ENCODE measurements at regions of chr14 and their contacts with region 1.

Region 1: DNA sequence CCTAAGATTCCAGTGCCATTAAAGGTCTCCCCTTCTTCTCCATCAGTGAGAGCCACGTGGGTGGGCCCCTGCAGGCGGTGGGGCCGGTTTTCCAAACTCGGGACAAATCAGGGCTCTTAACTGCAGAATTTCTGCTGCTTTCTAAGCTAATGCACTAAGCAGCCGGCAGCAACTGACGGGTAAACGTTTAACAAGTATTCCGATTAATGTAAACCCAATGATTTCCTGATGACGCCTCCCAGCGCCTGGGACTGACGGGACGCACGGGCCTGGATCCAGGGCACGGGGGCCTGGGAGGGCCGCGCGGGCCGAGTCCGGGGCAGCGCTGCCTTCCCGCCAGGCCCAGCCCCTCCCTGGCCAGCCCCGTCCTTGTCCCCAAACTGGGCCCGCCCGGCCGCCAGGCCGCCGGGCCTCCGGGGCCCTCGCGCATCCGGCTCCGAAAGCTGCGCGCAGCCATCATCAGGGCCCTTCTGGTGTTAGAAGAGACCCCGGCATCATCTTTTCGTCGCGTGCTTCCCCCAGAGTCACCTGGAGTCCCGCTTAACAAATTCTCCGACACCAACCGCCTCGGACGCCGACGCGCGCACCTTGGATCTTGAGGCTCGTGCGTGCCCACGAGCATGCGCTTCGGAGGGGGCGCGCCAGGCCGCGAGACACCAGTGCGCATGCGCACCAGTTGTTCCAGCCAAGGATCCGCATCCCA is at the start of gene MLH3:
- DNase-seq: peak; percentile 69 to 82 (median 78)
- ATAC-seq: peak; percentile 90
- H3K4me3 ChIP-seq: peak within 1 kb of the TSS; percentile 81
- H3K4me3 Mint-ChIP-seq: peak within 1 kb of the TSS; percentile 92 to 96 (median 94)
- H3K27ac ChIP-seq: peak within 1 kb of the TSS; percentile 86
- H3K27ac Mint-ChIP-seq: peak within 1 kb of the TSS; percentile 90 to 98 (median 95)
- H3K4me1 ChIP-seq: peaks cover 8 to 9% of the 10 kb centered on the region in 2 donors
- H3K4me1 Mint-ChIP-seq: peaks cover 19 to 65% (median 47%) of the 10 kb centered on the region in 7 donors
- H3K27me3 ChIP-seq: no peaks in the 10 kb centered on the region
- H3K27me3 Mint-ChIP-seq: no peaks in the 10 kb centered on the region
- total RNA-seq, gene MLH3: 19.9 to 26.7 (median 20.5) TPM

Region 2: GRCh38 chr14:74893614-74894091 is 157.3 kb before region 1 on chr14:
- CTCF ChIA-PET with region 1: no interaction called
- POLR2A ChIA-PET with region 1: no interaction called
- intact Hi-C with region 1: no loop called
- DNase-seq: no peak
- ATAC-seq: peak; percentile 47
- H3K4me3 ChIP-seq: no peak overlapping the region
- H3K4me3 Mint-ChIP-seq: no peak overlapping the region
- H3K27ac ChIP-seq: no peak overlapping the region
- H3K27ac Mint-ChIP-seq: peak overlapping the region in 5 of 9 donors; percentile 9 to 78 (median 36)
- H3K4me1 ChIP-seq: no peaks in the 10 kb centered on the region
- H3K4me1 Mint-ChIP-seq: peaks cover 0 to 11% (median 7%) of the 10 kb centered on the region in 7 donors
- H3K27me3 ChIP-seq: no peaks in the 10 kb centered on the region
- H3K27me3 Mint-ChIP-seq: no peaks in the 10 kb centered on the region

Region 3: DNA sequence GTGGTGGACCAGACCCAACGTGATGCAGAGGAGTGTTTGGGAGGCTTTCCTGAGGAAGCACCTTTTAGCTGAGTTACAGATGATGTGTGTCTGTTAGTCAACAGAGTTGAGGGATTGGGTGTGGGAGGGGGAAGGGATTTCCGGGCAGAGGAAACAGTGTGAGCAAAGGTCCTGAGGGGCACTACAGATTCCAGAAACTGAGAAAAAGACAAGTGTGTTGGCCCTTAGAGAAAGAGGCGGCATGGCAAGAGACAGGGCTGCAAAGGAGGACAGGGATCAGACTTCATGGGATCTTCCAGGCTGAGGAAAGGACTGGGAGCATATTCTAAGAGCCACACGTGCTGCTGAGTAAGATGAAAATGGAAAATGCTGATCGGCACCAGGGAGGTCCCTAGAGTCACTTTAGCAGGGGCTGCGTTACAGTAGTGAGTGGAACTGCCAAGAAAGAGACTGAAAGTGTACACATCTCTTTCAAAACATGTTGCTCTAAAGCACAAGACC is 118.6 kb before region 1 on chr14:
- CTCF ChIA-PET with region 1: no interaction called
- POLR2A ChIA-PET with region 1: no interaction called
- intact Hi-C with region 1: no loop called
- DNase-seq: no peak
- ATAC-seq: no peak
- H3K4me3 ChIP-seq: no peak overlapping the region
- H3K4me3 Mint-ChIP-seq: no peak overlapping the region
- H3K27ac ChIP-seq: no peak overlapping the region
- H3K27ac Mint-ChIP-seq: peak overlapping the region in 3 of 9 donors; percentile 22 to 50 (median 25)
- H3K4me1 ChIP-seq: peaks cover 0 to 3% of the 10 kb centered on the region in 2 donors
- H3K4me1 Mint-ChIP-seq: peaks cover 8 to 25% (median 22%) of the 10 kb centered on the region in 7 donors
- H3K27me3 ChIP-seq: no peaks in the 10 kb centered on the region
- H3K27me3 Mint-ChIP-seq: peaks cover 0 to 16% (median 3%) of the 10 kb centered on the region in 5 donors

Region 4: GRCh38 chr14:75063407-75064213 is 12.6 kb after region 1 on chr14 and contains the start of gene ACYP1:
- CTCF ChIA-PET with region 1: interaction called, 3 read pairs
- POLR2A ChIA-PET with region 1: interaction called, 29 read pairs
- intact Hi-C with region 1: loop called (anchors 1 kb)
- DNase-seq: peak; percentile 79 to 93 (median 86)
- ATAC-seq: peak; percentile 99
- H3K4me3 ChIP-seq: peak within 1 kb of the TSS; percentile 98
- H3K4me3 Mint-ChIP-seq: peak within 1 kb of the TSS; percentile 93 to 100 (median 99)
- H3K27ac ChIP-seq: peak within 1 kb of the TSS; percentile 83
- H3K27ac Mint-ChIP-seq: peak within 1 kb of the TSS; percentile 90 to 99 (median 96)
- H3K4me1 ChIP-seq: peaks cover 10 to 13% of the 10 kb centered on the region in 2 donors
- H3K4me1 Mint-ChIP-seq: peaks cover 15 to 38% (median 27%) of the 10 kb centered on the region in 7 donors
- H3K27me3 ChIP-seq: no peaks in the 10 kb centered on the region
- H3K27me3 Mint-ChIP-seq: no peaks in the 10 kb centered on the region
- total RNA-seq, gene ACYP1: 11.8 to 39.5 (median 31.2) TPM

Region 5: DNA sequence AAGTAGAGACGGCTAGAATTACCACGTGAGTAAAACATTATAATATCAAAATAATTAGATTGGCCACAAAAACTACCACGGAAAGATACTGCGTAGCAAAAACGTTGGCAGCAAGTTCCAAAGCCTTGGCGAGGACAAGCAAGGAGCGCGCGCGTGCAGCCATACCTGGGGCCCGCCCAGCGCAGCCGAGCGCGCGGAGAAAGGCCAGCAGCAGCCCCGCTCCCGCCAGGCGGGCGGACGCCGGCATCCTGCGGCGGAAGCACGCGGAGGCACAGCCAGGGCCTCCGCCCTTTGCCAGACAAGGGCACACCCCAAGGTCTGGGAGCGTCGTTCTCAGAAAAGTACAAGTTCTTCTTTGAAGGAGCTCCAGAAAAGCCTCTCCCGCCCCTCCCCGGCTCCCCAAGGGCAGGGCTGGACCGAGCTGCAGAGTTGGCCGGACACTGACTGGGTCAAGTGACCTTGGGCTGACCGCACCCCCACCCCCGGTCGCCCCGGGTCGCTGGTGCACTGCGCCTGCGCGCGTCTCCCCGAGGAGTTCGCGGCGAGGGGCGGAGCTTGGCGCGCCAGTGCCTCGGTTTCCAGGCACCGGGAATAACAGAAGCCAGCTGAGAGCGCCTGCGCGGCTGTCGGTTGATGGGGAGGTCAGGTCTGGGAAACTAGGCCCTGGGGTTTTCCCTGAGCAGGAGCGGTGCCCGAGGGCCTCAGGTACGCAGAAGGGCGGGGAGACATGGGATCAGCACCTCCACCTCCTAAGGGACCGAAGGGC is 18.2 kb after region 1 on chr14 and contains the start of gene ZC2HC1C:
- CTCF ChIA-PET with region 1: no interaction called
- POLR2A ChIA-PET with region 1: interaction called, 29 read pairs
- intact Hi-C with region 1: loop called in 1 of 2 experiments (anchors 2 kb)
- DNase-seq: peak; percentile 11 to 82 (median 34)
- ATAC-seq: peak; percentile 85
- H3K4me3 ChIP-seq: peak within 1 kb of the TSS; percentile 69
- H3K4me3 Mint-ChIP-seq: peak within 1 kb of the TSS in 6 of 10 donors; percentile 36 to 82 (median 68)
- H3K27ac ChIP-seq: peak within 1 kb of the TSS; percentile 46
- H3K27ac Mint-ChIP-seq: peak within 1 kb of the TSS in 2 of 9 donors; percentile 15 to 81
- H3K4me1 ChIP-seq: peaks cover 7 to 8% of the 10 kb centered on the region in 2 donors
- H3K4me1 Mint-ChIP-seq: peaks cover 2 to 15% (median 6%) of the 10 kb centered on the region in 7 donors
- H3K27me3 ChIP-seq: no peaks in the 10 kb centered on the region
- H3K27me3 Mint-ChIP-seq: peaks cover 0 to 3% (median 0%) of the 10 kb centered on the region in 5 donors
- total RNA-seq, gene ZC2HC1C: 1.7 TPM in 1 of 5 experiments, not detected in the others

Region 6: DNA sequence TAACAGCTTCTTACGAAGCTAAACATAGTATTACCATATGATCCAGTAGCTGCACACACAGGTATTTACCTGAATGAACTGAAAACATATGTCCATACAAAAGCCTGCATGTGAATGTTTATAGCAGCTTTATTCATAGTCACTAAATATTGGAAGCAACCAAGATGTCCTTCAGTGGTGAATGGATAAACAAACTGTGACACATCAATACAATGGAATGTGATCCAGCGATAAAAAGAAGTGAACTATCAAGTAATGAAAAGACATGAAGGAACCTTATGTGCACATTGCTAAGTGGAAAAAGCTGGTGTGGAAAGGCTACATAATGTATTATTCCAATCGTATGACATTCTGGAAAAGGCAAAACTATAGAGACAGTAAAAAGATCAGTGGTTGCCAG is 338.7 kb after region 1 on chr14:
- CTCF ChIA-PET with region 1: no interaction called
- POLR2A ChIA-PET with region 1: no interaction called
- intact Hi-C with region 1: no loop called
- DNase-seq: no peak
- ATAC-seq: no peak
- H3K4me3 ChIP-seq: no peak overlapping the region
- H3K4me3 Mint-ChIP-seq: no peak overlapping the region
- H3K27ac ChIP-seq: no peak overlapping the region
- H3K27ac Mint-ChIP-seq: no peak overlapping the region
- H3K4me1 ChIP-seq: no peaks in the 10 kb centered on the region
- H3K4me1 Mint-ChIP-seq: no peaks in the 10 kb centered on the region
- H3K27me3 ChIP-seq: no peaks in the 10 kb centered on the region
- H3K27me3 Mint-ChIP-seq: peaks cover 2 to 52% (median 5%) of the 10 kb centered on the region in 5 donors

Measured in naive thymus-derived CD4-positive, alpha-beta T cell (primary cell).